Vagina (tissue), 2 donors: ENCODE measurements at regions of chr6 and their contacts with region 1.

Region 1: GRCh38 chr6:35583893-35584688 is 71.4 kb upstream of the TULP1 start:
- DNase-seq: no peak
- H3K4me3 ChIP-seq: no peak overlapping the region
- H3K27ac ChIP-seq: peak overlapping the region; percentile 77
- H3K4me1 ChIP-seq: peaks cover 56% of the 10 kb centered on the region
- H3K27me3 ChIP-seq: no peaks in the 10 kb centered on the region
- CTCF ChIP-seq: peak; percentile 38 to 81 (median 47)
- POLR2A ChIP-seq: no peak

Region 2: DNA sequence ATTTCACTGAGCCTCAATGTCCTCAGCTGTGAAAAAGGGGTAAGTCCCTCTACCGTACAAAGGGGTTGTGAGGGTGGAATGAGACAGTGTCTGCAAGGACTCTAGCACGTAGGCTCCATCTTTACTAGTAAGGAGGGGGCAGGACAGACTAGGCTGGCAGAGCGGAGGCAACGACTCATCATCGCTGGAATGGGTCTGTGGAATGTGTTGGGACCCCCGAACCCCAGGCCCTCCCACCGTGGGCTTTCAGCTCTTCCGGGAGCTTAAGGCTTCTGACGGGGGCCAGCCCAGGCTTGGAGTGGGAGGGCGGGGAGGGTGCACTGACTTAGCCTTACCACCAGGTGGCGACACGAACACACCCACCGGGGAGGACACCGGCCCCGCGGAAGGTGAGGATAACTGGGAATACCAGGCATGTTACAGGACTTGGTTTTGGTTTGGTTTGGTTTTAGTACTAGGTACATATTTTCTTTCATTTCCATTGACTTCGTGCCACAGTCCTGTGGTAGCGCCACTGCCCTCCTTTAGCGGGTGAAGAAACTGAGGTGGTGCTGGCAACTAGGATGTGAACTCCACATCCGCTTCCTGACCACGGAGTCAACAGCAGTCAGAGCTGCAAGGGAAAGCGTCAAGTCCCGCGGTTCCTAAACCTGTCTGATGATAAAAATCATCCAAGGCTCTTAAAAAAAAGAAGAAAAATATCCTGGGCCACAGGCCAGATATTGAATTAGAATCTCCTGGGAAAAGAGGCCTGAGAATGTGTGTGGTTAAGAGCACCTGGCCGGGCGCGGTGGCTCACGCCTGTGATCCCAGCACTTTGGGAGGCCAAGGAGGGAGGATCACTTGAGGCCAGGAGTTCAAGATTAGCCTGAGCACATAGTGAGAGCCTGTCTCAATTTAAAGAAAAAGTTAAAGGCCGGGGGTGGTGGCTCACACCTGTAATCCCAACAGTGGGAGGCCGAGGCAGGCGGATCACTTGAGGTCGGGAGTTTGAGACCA is 61.1 kb before region 1 on chr6:
- intact Hi-C with region 1: loop called (anchors 2 kb)
- DNase-seq: no peak
- H3K4me3 ChIP-seq: peak overlapping the region in 1 of 2 donors; percentile 43
- H3K27ac ChIP-seq: no peak overlapping the region
- H3K4me1 ChIP-seq: no peaks in the 10 kb centered on the region
- H3K27me3 ChIP-seq: no peaks in the 10 kb centered on the region
- CTCF ChIP-seq: peak; percentile 93 to 98 (median 96)
- POLR2A ChIP-seq: no peak

Region 3: DNA sequence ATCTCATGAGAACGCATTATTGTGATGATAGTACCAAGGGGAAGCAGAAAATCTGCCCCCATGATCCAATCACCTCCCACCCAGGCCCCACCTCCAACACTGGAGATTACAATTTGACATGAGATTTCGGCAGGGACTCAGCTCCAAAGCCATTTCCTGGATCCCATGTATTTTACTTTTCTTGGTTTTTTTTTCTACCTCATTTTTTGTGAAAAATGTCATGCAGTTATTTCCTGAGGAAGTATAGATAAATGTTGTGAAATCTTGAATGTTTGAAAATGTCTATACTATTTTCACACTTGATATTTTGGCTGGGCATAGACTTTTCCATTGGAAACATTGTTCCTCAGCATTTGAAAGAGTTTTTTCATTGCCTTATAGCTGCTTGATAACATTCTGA is 603.4 kb after region 1 on chr6:
- intact Hi-C with region 1: no loop called
- DNase-seq: no peak
- H3K4me3 ChIP-seq: no peak overlapping the region
- H3K27ac ChIP-seq: no peak overlapping the region
- H3K4me1 ChIP-seq: no peaks in the 10 kb centered on the region
- H3K27me3 ChIP-seq: no peaks in the 10 kb centered on the region
- CTCF ChIP-seq: no peak
- POLR2A ChIP-seq: no peak